CD4-positive, alpha-beta T cell (primary cell): ENCODE measurements at regions of chr7 and their contacts with region 1.

Region 1: GRCh38 chr7:128209229-128210035 is 31.6 kb upstream of the LEP start:
- DNase-seq: peak; percentile 53 to 87 (median 61)
- ATAC-seq: peak; percentile 96
- H3K4me3 ChIP-seq: no peak overlapping the region
- H3K4me3 Mint-ChIP-seq: no peak overlapping the region
- H3K27ac ChIP-seq: no peak overlapping the region
- H3K27ac Mint-ChIP-seq: no peak overlapping the region
- H3K4me1 ChIP-seq: peaks cover 4% of the 10 kb centered on the region
- H3K4me1 Mint-ChIP-seq: no peaks in the 10 kb centered on the region
- H3K27me3 ChIP-seq: peaks cover 3 to 5% of the 10 kb centered on the region in 2 experiments
- H3K27me3 Mint-ChIP-seq: peaks cover 15% of the 10 kb centered on the region
- CTCF ChIP-seq: peak; percentile 97

Region 2: DNA sequence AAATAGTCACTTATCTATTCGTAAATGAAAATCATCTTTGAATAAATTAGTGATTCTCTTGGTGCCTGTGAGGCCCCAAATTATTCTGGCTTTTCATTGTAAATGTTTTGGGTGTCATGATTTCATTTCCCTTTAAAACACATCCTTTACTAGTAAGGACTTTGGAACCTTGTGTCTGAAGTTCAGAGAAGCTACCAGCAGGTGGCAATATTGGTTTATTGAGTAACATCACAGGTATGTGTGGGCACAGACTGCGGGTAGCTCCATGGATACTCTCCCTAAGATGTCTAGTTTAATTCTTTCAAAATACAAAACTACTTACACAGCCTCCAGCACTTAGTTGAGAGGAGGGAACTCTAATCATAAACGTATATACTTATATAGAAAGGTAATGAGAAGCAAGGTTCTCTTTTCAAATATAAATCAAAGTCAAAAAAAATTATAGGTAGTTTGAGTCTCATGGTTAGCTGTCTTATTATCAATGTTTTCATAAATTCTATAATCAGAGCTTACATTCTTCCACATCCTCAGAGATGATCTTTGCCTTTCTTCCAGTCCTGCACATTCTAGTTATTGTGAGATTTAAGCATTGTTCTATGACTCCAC is 1406.3 kb before region 1 on chr7:
- CTCF ChIA-PET with region 1: interaction called, 3 read pairs
- POLR2A ChIA-PET with region 1: no interaction called
- intact Hi-C with region 1: loop called (anchors 5 to 10 kb)
- DNase-seq: peak in 7 of 14 experiments; percentile 0 to 50 (median 15)
- ATAC-seq: peak; percentile 29
- H3K4me3 ChIP-seq: no peak overlapping the region
- H3K4me3 Mint-ChIP-seq: no peak overlapping the region
- H3K27ac ChIP-seq: no peak overlapping the region
- H3K27ac Mint-ChIP-seq: no peak overlapping the region
- H3K4me1 ChIP-seq: no peaks in the 10 kb centered on the region
- H3K4me1 Mint-ChIP-seq: no peaks in the 10 kb centered on the region
- H3K27me3 ChIP-seq: peaks cover 0 to 6% of the 10 kb centered on the region in 2 experiments
- H3K27me3 Mint-ChIP-seq: peaks cover 26% of the 10 kb centered on the region
- CTCF ChIP-seq: peak; percentile 57

Region 3: GRCh38 chr7:127557803-127558202 is 651.6 kb before region 1 on chr7:
- CTCF ChIA-PET with region 1: no interaction called
- POLR2A ChIA-PET with region 1: no interaction called
- intact Hi-C with region 1: loop called in 1 of 2 experiments (anchors 5 kb)
- DNase-seq: no peak
- ATAC-seq: no peak
- H3K4me3 ChIP-seq: no peak overlapping the region
- H3K4me3 Mint-ChIP-seq: no peak overlapping the region
- H3K27ac ChIP-seq: no peak overlapping the region
- H3K27ac Mint-ChIP-seq: no peak overlapping the region
- H3K4me1 ChIP-seq: no peaks in the 10 kb centered on the region
- H3K4me1 Mint-ChIP-seq: no peaks in the 10 kb centered on the region
- H3K27me3 ChIP-seq: no peaks in the 10 kb centered on the region
- H3K27me3 Mint-ChIP-seq: no peaks in the 10 kb centered on the region
- CTCF ChIP-seq: no peak

Region 4: GRCh38 chr7:128031901-128032604 is 177.4 kb before region 1 on chr7:
- CTCF ChIA-PET with region 1: no interaction called
- POLR2A ChIA-PET with region 1: no interaction called
- intact Hi-C with region 1: loop called in 1 of 2 experiments (anchors 5 kb)
- DNase-seq: peak; percentile 10 to 78 (median 37)
- ATAC-seq: peak; percentile 92
- H3K4me3 ChIP-seq: peak overlapping the region; percentile 20
- H3K4me3 Mint-ChIP-seq: peak overlapping the region; percentile 94
- H3K27ac ChIP-seq: no peak overlapping the region
- H3K27ac Mint-ChIP-seq: peak overlapping the region; percentile 64
- H3K4me1 ChIP-seq: peaks cover 23% of the 10 kb centered on the region
- H3K4me1 Mint-ChIP-seq: peaks cover 30% of the 10 kb centered on the region
- H3K27me3 ChIP-seq: peaks cover 0 to 10% of the 10 kb centered on the region in 2 experiments
- H3K27me3 Mint-ChIP-seq: no peaks in the 10 kb centered on the region
- CTCF ChIP-seq: no peak